IMR-90 (cell line): ENCODE measurements at regions of chr2 and their contacts with region 1.

Region 1: DNA sequence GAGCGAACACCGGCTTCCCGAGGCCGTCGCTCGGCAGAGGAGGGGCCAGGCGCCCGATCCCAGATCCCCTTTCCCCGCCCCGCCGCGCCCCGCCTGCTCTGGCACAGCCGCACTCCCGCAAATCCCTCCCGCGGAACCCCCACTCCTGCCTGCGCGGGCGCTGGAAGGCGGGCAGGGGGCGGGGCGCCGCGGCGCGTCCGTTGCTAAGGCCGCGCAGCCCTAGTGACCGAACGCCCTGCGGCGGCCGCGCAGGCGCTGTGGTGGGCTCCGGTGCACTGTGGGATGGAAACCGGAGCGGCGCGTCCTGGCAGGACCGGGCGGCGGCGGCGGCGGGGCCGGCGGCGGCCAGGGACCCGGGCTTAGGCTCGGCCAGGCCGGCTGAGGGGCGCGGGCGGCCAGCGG is at the start of gene TRAF3IP1:
- DNase-seq: peak; percentile 89
- ATAC-seq: peak; percentile 95
- H3K4me3 ChIP-seq: peak within 1 kb of the TSS; percentile 74
- H3K27ac ChIP-seq: no peak within 1 kb of the TSS; the same call in 1 of the 2 replicates
- H3K4me1 ChIP-seq: peaks cover 7% of the 10 kb centered on the region
- H3K27me3 ChIP-seq: peaks cover 8% of the 10 kb centered on the region
- CTCF ChIP-seq: no peak
- POLR2A ChIP-seq: no peak
- RAD21 ChIP-seq: no peak
- total RNA-seq, gene TRAF3IP1: 5.9 and 6.9 TPM in 2 replicates

Region 2: DNA sequence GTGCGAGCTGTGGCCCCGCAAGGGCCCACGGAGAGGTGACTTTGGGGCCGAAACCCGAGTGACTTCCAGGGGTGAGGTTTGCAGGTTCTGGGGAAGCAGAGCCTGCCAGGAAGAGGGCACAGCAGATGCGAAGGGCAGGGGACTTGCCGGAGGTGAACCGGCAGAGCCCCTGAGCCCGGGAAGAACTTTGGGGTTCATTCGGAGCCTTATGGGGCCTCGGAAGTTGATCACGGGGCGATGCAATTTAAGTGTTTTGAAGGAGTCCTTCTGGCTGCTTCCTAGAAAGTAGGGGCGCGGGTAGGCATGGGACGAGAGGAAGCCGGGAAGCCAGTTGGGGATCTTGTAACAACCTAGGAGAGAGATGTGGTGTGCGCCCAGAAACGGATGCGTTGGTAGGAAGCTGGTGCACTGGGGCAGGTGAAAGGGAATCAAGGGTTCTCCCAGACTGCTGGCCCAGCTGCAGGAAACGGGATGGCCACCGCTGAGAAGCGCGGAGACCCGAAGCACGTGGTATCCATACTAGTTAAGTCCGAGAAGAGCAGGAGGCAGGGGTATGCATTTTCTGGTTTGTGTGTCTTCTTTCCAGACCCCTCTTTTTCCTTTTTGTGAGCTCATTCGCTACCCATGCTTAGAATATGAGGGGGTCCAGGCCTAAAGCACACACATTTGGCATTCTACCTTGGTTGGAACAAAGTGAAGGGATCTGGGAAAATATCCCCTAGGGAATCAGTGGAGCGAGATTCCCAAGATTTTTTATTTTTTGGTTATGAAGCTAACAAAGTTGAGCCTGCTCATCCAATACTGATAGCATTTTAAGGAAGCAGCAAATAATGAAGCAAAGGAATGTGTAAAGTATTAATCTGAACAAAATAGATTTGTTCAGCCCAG is 258.7 kb before region 1 on chr2:
- CTCF ChIA-PET with region 1: no interaction called
- POLR2A ChIA-PET with region 1: no interaction called
- dilution Hi-C with region 1: no loop called
- in situ Hi-C with region 1: no loop called
- intact Hi-C with region 1: no loop called
- DNase-seq: peak; percentile 33
- ATAC-seq: peak; percentile 1
- H3K4me3 ChIP-seq: peak overlapping the region; percentile 66
- H3K27ac ChIP-seq: peak overlapping the region; percentile 30
- H3K4me1 ChIP-seq: no peaks in the 10 kb centered on the region; the same call in 1 of the 2 replicates
- H3K27me3 ChIP-seq: no peaks in the 10 kb centered on the region
- CTCF ChIP-seq: no peak
- POLR2A ChIP-seq: no peak
- RAD21 ChIP-seq: no peak

Region 3: GRCh38 chr2:238288650-238289573 is 31.3 kb before region 1 on chr2:
- CTCF ChIA-PET with region 1: no interaction called
- POLR2A ChIA-PET with region 1: no interaction called
- dilution Hi-C with region 1: no loop called
- in situ Hi-C with region 1: no loop called
- intact Hi-C with region 1: loop called (anchors 1 kb)
- DNase-seq: peak; percentile 99
- ATAC-seq: peak; percentile 90
- H3K4me3 ChIP-seq: peak overlapping the region; percentile 69
- H3K27ac ChIP-seq: peak overlapping the region; percentile 33; the same call in 1 of the 2 replicates
- H3K4me1 ChIP-seq: peaks cover 23% of the 10 kb centered on the region
- H3K27me3 ChIP-seq: peaks cover 3% of the 10 kb centered on the region; the same call in 1 of the 2 replicates
- CTCF ChIP-seq: peak; percentile 46
- POLR2A ChIP-seq: peak; percentile 76
- RAD21 ChIP-seq: no peak

Region 4: GRCh38 chr2:238908960-238909951 is 589.0 kb after region 1 on chr2:
- CTCF ChIA-PET with region 1: no interaction called
- POLR2A ChIA-PET with region 1: no interaction called
- dilution Hi-C with region 1: no loop called
- in situ Hi-C with region 1: no loop called
- intact Hi-C with region 1: no loop called
- DNase-seq: peak; percentile 34
- ATAC-seq: peak; percentile 36
- H3K4me3 ChIP-seq: no peak overlapping the region
- H3K27ac ChIP-seq: no peak overlapping the region
- H3K4me1 ChIP-seq: peaks cover 7% of the 10 kb centered on the region
- H3K27me3 ChIP-seq: no peaks in the 10 kb centered on the region
- CTCF ChIP-seq: no peak
- POLR2A ChIP-seq: no peak
- RAD21 ChIP-seq: no peak